ENCODE measurements at regions of chrX and their contacts with region 1.

Region 1: GRCh38 chrX:42714981-42715700 is 62.8 kb downstream of the PPP1R2C start:
- DNase-seq: peak; percentile 26 to 75 (median 62)
- H3K4me3 ChIP-seq: peak overlapping the region in 19 of 59 donors; percentile 1 to 41 (median 14)
- H3K27ac ChIP-seq: peak overlapping the region in 53 of 59 donors; percentile 6 to 86 (median 70)
- H3K27me3 ChIP-seq: peaks cover 0 to 79% (median 18%) of the 10 kb centered on the region in 45 donors
- CTCF ChIP-seq: peak in 53 of 56 donors; percentile 15 to 68 (median 45)

Region 2: GRCh38 chrX:42680666-42681065 is 34.5 kb before region 1 on chrX:
- intact Hi-C with region 1: loop called in 1 of 2 experiments (anchors 5 kb)
- DNase-seq: no peak
- H3K4me3 ChIP-seq: no peak overlapping the region
- H3K27ac ChIP-seq: no peak overlapping the region
- H3K27me3 ChIP-seq: peaks cover 0 to 73% (median 16%) of the 10 kb centered on the region in 45 donors
- CTCF ChIP-seq: peak in 19 of 56 donors; percentile 6 to 40 (median 17)

Region 3: GRCh38 chrX:42695800-42696358 is 19.3 kb before region 1 on chrX:
- intact Hi-C with region 1: loop called in 1 of 2 experiments (anchors 2 kb)
- DNase-seq: no peak
- H3K4me3 ChIP-seq: no peak overlapping the region
- H3K27ac ChIP-seq: no peak overlapping the region
- H3K27me3 ChIP-seq: peaks cover 0 to 73% (median 11%) of the 10 kb centered on the region in 45 donors
- CTCF ChIP-seq: no peak

Region 4: GRCh38 chrX:43373037-43373436 is 657.9 kb after region 1 on chrX:
- intact Hi-C with region 1: no loop called
- DNase-seq: no peak
- H3K4me3 ChIP-seq: no peak overlapping the region
- H3K27ac ChIP-seq: no peak overlapping the region
- H3K27me3 ChIP-seq: peaks cover 0 to 28% (median 0%) of the 10 kb centered on the region in 45 donors
- CTCF ChIP-seq: no peak

Measured in dorsolateral prefrontal cortex (tissue), 120 donors.